Dorsolateral prefrontal cortex (tissue), 120 donors: ENCODE measurements at regions of chr11 and their contacts with region 1.

Region 1: GRCh38 chr11:58503361-58503856 is 4.5 kb downstream of the OR5B21 start:
- DNase-seq: no peak
- H3K4me3 ChIP-seq: no peak overlapping the region
- H3K27ac ChIP-seq: no peak overlapping the region
- H3K27me3 ChIP-seq: no peaks in the 10 kb centered on the region
- CTCF ChIP-seq: no peak

Region 2: GRCh38 chr11:57885298-57886050 is 617.9 kb before region 1 on chr11:
- intact Hi-C with region 1: loop called in 1 of 2 experiments (anchors 10 kb)
- DNase-seq: peak in 2 of 10 donors; percentile 17 to 21
- H3K4me3 ChIP-seq: no peak overlapping the region
- H3K27ac ChIP-seq: peak overlapping the region in 15 of 59 donors; percentile 9 to 63 (median 36)
- H3K27me3 ChIP-seq: no peaks in the 10 kb centered on the region
- CTCF ChIP-seq: no peak